Activated T-helper 2 cell treated with anti-CD3 and anti-CD28 coated beads, Interferon-gamma antibody, Interleukin-2, Interleukin-4, amounts not matched to agents 10 μg/mL and 5 μg/mL and 100 μg/mL, durations not matched to agents 14 hours and 24 hours and 36 hours (primary cell): ENCODE measurements at regions of chr3 and their contacts with region 1.

Region 1: GRCh38 chr3:195467641-195468390 is 25.0 kb upstream of the ACAP2 start:
- DNase-seq: no peak
- H3K4me3 Mint-ChIP-seq: no peak overlapping the region
- H3K27ac Mint-ChIP-seq: peak overlapping the region; percentile 84
- H3K4me1 Mint-ChIP-seq: peaks cover 20% of the 10 kb centered on the region
- H3K27me3 Mint-ChIP-seq: peaks cover 5% of the 10 kb centered on the region

Region 2: GRCh38 chr3:195442573-195443390 is 25.0 kb before region 1 on chr3 and contains the start of gene ACAP2:
- intact Hi-C with region 1: loop called (anchors 2 kb)
- DNase-seq: peak; percentile 99
- H3K4me3 Mint-ChIP-seq: peak within 1 kb of the TSS; percentile 94
- H3K27ac Mint-ChIP-seq: peak within 1 kb of the TSS; percentile 85
- H3K4me1 Mint-ChIP-seq: peaks cover 31% of the 10 kb centered on the region
- H3K27me3 Mint-ChIP-seq: no peaks in the 10 kb centered on the region
- total RNA-seq, gene ACAP2: 49.8 and 51.5 TPM in 2 replicates